Activated T-helper 1 cell treated with anti-CD3 and anti-CD28 coated beads, Interleukin-12 subunit alpha, Interleukin-12 subunit beta, Interleukin-2, Interleukin-4 antibody, amounts not matched to agents 30 ng/mL and 10 ng/mL and 1 ng/mL, durations not matched to agents 14 hours and 24 hours and 36 hours (primary cell): ENCODE measurements at regions of chrX and their contacts with region 1.

Region 1: GRCh38 chrX:39772057-39772832 is 325.5 kb downstream of the BCOR start:
- DNase-seq: peak; percentile 22
- H3K4me3 Mint-ChIP-seq: peak overlapping the region; percentile 73
- H3K27ac Mint-ChIP-seq: peak overlapping the region; percentile 98
- H3K4me1 Mint-ChIP-seq: peaks cover 48% of the 10 kb centered on the region
- H3K27me3 Mint-ChIP-seq: no peaks in the 10 kb centered on the region

Region 2: GRCh38 chrX:38803586-38804431 is 968.4 kb before region 1 on chrX:
- intact Hi-C with region 1: loop called (anchors 5 kb)
- DNase-seq: peak; percentile 69
- H3K4me3 Mint-ChIP-seq: peak overlapping the region; percentile 89
- H3K27ac Mint-ChIP-seq: peak overlapping the region; percentile 91
- H3K4me1 Mint-ChIP-seq: peaks cover 15% of the 10 kb centered on the region
- H3K27me3 Mint-ChIP-seq: no peaks in the 10 kb centered on the region

Region 3: GRCh38 chrX:39261446-39262147 is 510.6 kb before region 1 on chrX:
- intact Hi-C with region 1: loop called (anchors 5 kb)
- DNase-seq: peak; percentile 1
- H3K4me3 Mint-ChIP-seq: no peak overlapping the region
- H3K27ac Mint-ChIP-seq: peak overlapping the region; percentile 89
- H3K4me1 Mint-ChIP-seq: peaks cover 43% of the 10 kb centered on the region
- H3K27me3 Mint-ChIP-seq: no peaks in the 10 kb centered on the region

Region 4: DNA sequence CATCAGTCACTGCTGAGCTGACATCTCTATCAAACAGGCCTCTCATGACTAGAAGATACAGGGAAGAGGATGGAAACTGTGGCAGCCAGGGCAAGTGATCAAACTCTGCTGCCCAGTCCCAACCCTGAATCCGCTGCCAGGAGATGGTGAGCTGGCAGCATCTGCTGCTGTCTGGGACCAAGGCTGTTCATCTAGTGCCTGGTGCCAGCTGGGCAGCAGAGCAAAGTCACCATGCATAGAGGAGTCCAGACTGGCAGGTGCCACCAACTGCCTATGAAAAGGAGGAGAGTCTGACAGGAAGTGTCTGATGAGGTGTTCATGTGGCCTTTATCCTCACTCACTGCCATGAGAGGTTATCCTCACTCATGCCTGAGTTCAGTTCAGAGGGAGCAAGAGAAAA is 452.1 kb before region 1 on chrX:
- intact Hi-C with region 1: no loop called
- DNase-seq: no peak
- H3K4me3 Mint-ChIP-seq: no peak overlapping the region
- H3K27ac Mint-ChIP-seq: peak overlapping the region; percentile 29
- H3K4me1 Mint-ChIP-seq: peaks cover 49% of the 10 kb centered on the region
- H3K27me3 Mint-ChIP-seq: no peaks in the 10 kb centered on the region

Region 5: GRCh38 chrX:39336671-39337311 is 435.5 kb before region 1 on chrX:
- intact Hi-C with region 1: loop called (anchors 10 kb)
- DNase-seq: peak; percentile 2
- H3K4me3 Mint-ChIP-seq: peak overlapping the region; percentile 51
- H3K27ac Mint-ChIP-seq: peak overlapping the region; percentile 86
- H3K4me1 Mint-ChIP-seq: peaks cover 34% of the 10 kb centered on the region
- H3K27me3 Mint-ChIP-seq: no peaks in the 10 kb centered on the region

Region 6: DNA sequence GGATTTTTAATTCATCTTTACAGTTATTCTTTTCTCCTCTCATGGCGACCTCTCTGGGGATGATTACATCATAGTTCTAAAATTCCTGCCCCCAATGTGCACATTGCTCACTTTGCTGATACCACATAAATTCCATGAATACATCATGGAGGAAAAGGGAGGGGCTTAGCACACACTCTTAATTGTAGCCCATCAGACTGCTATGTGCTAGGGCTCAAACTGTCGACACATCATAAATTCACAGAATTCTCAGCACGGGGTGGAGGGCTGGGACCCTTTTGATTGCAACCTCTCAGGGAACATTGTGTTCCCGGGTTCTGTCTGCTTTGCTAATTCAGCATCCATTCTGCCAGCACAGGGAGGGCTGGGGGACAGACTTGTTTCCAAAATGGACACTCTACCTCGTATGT is 267.4 kb before region 1 on chrX:
- intact Hi-C with region 1: loop called (anchors 1 kb)
- DNase-seq: no peak
- H3K4me3 Mint-ChIP-seq: no peak overlapping the region
- H3K27ac Mint-ChIP-seq: no peak overlapping the region
- H3K4me1 Mint-ChIP-seq: peaks cover 26% of the 10 kb centered on the region
- H3K27me3 Mint-ChIP-seq: peaks cover 6% of the 10 kb centered on the region

Region 7: DNA sequence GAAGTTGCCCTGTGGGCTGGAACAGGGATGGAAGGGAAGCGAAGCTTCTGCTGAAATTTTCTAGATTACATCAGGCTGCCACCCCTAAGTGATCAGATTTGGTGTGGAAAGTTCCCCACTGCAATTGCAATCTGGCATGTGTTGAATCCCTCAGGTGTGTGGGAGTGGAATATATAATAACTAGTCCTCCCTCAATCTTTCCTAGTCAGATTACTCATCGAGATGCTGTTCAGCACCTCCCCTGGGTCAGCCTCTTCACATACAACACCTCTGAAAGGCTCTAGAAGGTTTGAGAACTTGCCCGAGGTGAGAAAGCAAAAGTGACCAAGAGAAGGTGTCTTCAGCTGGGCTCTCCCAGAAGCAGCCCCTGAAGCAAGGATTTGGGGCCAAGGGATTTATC is 11.3 kb before region 1 on chrX:
- intact Hi-C with region 1: loop called (anchors 1 kb)
- DNase-seq: no peak
- H3K4me3 Mint-ChIP-seq: peak overlapping the region; percentile 61
- H3K27ac Mint-ChIP-seq: peak overlapping the region; percentile 91
- H3K4me1 Mint-ChIP-seq: peaks cover 24% of the 10 kb centered on the region
- H3K27me3 Mint-ChIP-seq: no peaks in the 10 kb centered on the region

Region 8: DNA sequence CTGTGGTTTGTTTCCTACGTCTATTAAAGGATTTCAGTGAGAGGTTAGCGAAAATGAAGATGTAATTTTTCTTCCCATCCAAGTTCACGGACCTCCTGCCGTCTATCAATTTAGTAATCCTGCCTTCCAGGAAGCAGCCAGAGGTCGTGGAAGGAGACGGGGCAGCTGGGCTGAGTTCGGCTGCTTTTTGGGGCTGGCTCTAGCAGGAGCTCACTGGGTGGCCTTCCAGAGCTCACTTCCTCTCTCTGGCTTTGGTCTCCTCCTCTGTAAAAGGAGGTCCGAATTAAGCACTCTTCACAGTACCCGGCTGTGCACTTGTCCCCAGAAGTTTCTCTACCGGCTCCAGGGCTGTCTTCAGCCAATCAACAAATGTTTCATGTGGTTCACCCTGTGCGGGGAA is 30.1 kb after region 1 on chrX:
- intact Hi-C with region 1: no loop called
- DNase-seq: no peak
- H3K4me3 Mint-ChIP-seq: no peak overlapping the region
- H3K27ac Mint-ChIP-seq: no peak overlapping the region
- H3K4me1 Mint-ChIP-seq: peaks cover 12% of the 10 kb centered on the region
- H3K27me3 Mint-ChIP-seq: no peaks in the 10 kb centered on the region

Region 9: DNA sequence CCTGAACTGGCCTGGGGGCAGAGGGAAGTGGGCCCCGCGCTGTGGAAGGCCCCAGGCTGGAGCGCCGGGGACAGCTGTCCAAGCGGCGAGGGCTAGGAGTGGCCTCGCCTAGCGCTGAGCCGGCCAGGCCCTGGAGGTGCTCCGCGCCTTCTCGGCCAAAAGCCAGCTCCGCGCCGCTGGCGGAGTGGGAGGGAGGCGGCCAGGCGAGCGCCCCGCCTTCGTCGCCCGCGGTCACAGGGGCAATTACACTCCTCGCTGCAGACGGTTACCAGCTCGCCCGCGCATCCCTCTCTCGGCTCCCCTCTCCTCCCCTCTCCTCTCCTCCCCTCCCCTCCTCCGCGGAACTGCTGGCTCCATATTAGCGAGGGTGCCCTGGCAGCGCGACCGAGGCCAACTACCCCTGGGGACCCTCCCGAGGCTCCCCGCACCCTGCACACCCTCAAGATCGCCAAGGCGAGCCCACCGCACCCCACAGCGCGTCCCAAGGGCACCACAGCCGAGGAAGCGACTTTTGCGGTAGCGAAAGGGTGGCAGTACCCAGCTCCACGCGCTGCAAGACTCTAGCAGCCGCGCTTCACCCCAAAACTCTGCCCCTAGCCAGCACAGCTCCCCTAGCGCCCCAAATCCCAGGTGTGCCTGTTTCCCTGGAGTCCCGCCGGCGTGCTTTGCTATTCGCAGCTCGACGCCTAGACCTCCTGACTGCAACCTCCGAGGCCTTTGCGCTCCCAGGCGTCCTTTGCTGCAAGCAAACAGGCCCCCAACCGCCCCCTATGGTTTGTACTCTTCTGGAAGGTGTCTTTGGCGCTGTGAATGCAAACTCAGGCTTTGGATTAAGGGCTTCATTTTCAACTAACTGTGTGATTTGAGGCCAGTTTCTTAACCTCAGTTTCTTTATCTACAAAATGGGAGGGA is 234.1 kb after region 1 on chrX:
- intact Hi-C with region 1: loop called (anchors 2 kb)
- DNase-seq: peak; percentile 10
- H3K4me3 Mint-ChIP-seq: peak overlapping the region; percentile 30
- H3K27ac Mint-ChIP-seq: no peak overlapping the region
- H3K4me1 Mint-ChIP-seq: peaks cover 13% of the 10 kb centered on the region
- H3K27me3 Mint-ChIP-seq: peaks cover 23% of the 10 kb centered on the region